ENCODE measurements at regions of chr3 and their contacts with region 1.

Region 1: DNA sequence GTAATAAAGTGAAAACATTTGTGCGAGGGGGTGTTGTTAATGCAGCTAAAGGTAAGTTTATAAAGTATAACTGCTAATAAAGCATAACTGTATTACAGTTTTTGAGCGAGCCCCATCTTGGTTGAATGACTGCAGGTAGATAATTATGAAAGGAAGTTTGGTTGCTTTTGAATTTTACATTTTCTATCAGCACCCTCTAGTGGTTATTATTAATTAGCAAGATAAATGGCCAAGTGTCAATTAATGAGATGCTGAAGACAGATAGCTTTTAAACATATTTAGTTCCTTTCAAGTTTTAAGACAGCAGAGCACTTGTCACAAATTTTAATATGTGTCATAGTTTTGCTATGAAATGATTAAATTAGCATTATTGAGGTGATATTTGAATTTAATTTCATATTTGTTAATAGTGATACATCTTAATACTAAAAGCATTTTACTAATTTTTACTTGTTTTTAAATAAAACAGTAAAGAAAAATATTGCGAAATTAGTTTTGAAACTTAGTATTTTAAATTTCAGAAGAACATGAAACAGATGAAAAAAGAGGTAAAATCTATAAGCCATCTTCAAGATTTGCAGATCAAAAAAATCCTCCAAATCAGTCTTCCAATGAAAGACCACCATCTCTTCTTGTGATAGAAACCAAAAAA is 15.1 kb downstream of the U2SURP start:
- DNase-seq: no peak
- ATAC-seq: no peak
- H3K4me3 Mint-ChIP-seq: no peak overlapping the region
- H3K27ac Mint-ChIP-seq: no peak overlapping the region
- H3K4me1 Mint-ChIP-seq: peaks cover 6% of the 10 kb centered on the region
- H3K27me3 Mint-ChIP-seq: no peaks in the 10 kb centered on the region

Region 2: GRCh38 chr3:143001369-143002082 is 14.9 kb before region 1 on chr3 and contains the start of gene U2SURP:
- CTCF ChIA-PET with region 1: interaction called, 24 read pairs
- POLR2A ChIA-PET with region 1: interaction called, 47 read pairs
- DNase-seq: peak; percentile 96
- ATAC-seq: peak; percentile 86
- H3K4me3 Mint-ChIP-seq: peak within 1 kb of the TSS; percentile 98
- H3K27ac Mint-ChIP-seq: peak within 1 kb of the TSS; percentile 100
- H3K4me1 Mint-ChIP-seq: peaks cover 35% of the 10 kb centered on the region
- H3K27me3 Mint-ChIP-seq: no peaks in the 10 kb centered on the region
- total RNA-seq, gene U2SURP: 123 to 124 TPM

Region 3: GRCh38 chr3:143031327-143031726 is 14.9 kb after region 1 on chr3:
- CTCF ChIA-PET with region 1: interaction called, 11 read pairs
- POLR2A ChIA-PET with region 1: no interaction called
- DNase-seq: no peak
- ATAC-seq: no peak
- H3K4me3 Mint-ChIP-seq: no peak overlapping the region
- H3K27ac Mint-ChIP-seq: no peak overlapping the region
- H3K4me1 Mint-ChIP-seq: peaks cover 7% of the 10 kb centered on the region
- H3K27me3 Mint-ChIP-seq: no peaks in the 10 kb centered on the region

Measured in activated CD8-positive, alpha-beta T cell treated with anti-CD3 and anti-CD28 coated beads, Interleukin-2, amount 10 ng/mL, durations not matched to agents 7 days and 5 days (primary cell).